B cell (primary cell): ENCODE measurements at regions of chr3 and their contacts with region 1.

Region 1: GRCh38 chr3:153043729-153044328 is 118.2 kb upstream of the RAP2B start:
- DNase-seq: no peak
- ATAC-seq: no peak
- H3K4me3 ChIP-seq: no peak overlapping the region
- H3K4me3 Mint-ChIP-seq: no peak overlapping the region
- H3K27ac ChIP-seq: no peak overlapping the region
- H3K27ac Mint-ChIP-seq: no peak overlapping the region
- H3K4me1 ChIP-seq: no peaks in the 10 kb centered on the region
- H3K4me1 Mint-ChIP-seq: no peaks in the 10 kb centered on the region
- H3K27me3 ChIP-seq: no peaks in the 10 kb centered on the region
- H3K27me3 Mint-ChIP-seq: peaks cover 6% of the 10 kb centered on the region
- CTCF ChIP-seq: no peak

Region 2: DNA sequence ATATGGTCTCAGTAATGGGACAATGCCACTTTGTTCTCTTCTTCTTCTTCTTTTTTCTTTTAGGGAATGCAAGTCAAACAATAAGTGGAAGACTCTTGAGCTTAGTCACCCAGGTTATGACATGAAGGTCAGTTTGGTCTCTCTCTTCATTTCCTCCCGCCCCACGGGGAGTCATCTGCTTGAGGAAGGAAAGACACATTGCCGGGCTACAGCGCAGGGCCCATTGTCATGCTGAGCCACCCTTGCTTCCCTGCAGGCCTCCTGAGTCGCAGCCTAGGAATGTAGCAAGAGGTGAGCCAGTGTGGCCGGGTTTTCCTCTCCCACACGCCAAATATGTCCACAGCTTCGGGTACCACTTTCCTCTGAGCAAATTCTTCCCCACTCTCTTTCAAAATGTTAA is 165.8 kb after region 1 on chr3:
- CTCF ChIA-PET with region 1: no interaction called
- POLR2A ChIA-PET with region 1: no interaction called
- intact Hi-C with region 1: no loop called
- DNase-seq: peak; percentile 4
- ATAC-seq: no peak
- H3K4me3 ChIP-seq: no peak overlapping the region
- H3K4me3 Mint-ChIP-seq: no peak overlapping the region
- H3K27ac ChIP-seq: no peak overlapping the region
- H3K27ac Mint-ChIP-seq: no peak overlapping the region
- H3K4me1 ChIP-seq: peaks cover 0 to 4% of the 10 kb centered on the region in 2 donors
- H3K4me1 Mint-ChIP-seq: no peaks in the 10 kb centered on the region
- H3K27me3 ChIP-seq: no peaks in the 10 kb centered on the region
- H3K27me3 Mint-ChIP-seq: no peaks in the 10 kb centered on the region
- CTCF ChIP-seq: no peak

Region 3: GRCh38 chr3:153290272-153291015 is 246.6 kb after region 1 on chr3:
- CTCF ChIA-PET with region 1: interaction called, 5 read pairs
- POLR2A ChIA-PET with region 1: no interaction called
- intact Hi-C with region 1: loop called (anchors 1 kb)
- DNase-seq: peak; percentile 11
- ATAC-seq: no peak
- H3K4me3 ChIP-seq: no peak overlapping the region
- H3K4me3 Mint-ChIP-seq: no peak overlapping the region
- H3K27ac ChIP-seq: no peak overlapping the region
- H3K27ac Mint-ChIP-seq: no peak overlapping the region
- H3K4me1 ChIP-seq: no peaks in the 10 kb centered on the region
- H3K4me1 Mint-ChIP-seq: no peaks in the 10 kb centered on the region
- H3K27me3 ChIP-seq: no peaks in the 10 kb centered on the region
- H3K27me3 Mint-ChIP-seq: no peaks in the 10 kb centered on the region
- CTCF ChIP-seq: no peak

Region 4: GRCh38 chr3:153443961-153444360 is 400.1 kb after region 1 on chr3:
- CTCF ChIA-PET with region 1: interaction called, 4 read pairs
- POLR2A ChIA-PET with region 1: no interaction called
- intact Hi-C with region 1: loop called (anchors 5 kb)
- DNase-seq: no peak
- ATAC-seq: no peak
- H3K4me3 ChIP-seq: no peak overlapping the region
- H3K4me3 Mint-ChIP-seq: no peak overlapping the region
- H3K27ac ChIP-seq: no peak overlapping the region
- H3K27ac Mint-ChIP-seq: no peak overlapping the region
- H3K4me1 ChIP-seq: no peaks in the 10 kb centered on the region
- H3K4me1 Mint-ChIP-seq: no peaks in the 10 kb centered on the region
- H3K27me3 ChIP-seq: no peaks in the 10 kb centered on the region
- H3K27me3 Mint-ChIP-seq: peaks cover 3% of the 10 kb centered on the region
- CTCF ChIP-seq: no peak

Region 5: DNA sequence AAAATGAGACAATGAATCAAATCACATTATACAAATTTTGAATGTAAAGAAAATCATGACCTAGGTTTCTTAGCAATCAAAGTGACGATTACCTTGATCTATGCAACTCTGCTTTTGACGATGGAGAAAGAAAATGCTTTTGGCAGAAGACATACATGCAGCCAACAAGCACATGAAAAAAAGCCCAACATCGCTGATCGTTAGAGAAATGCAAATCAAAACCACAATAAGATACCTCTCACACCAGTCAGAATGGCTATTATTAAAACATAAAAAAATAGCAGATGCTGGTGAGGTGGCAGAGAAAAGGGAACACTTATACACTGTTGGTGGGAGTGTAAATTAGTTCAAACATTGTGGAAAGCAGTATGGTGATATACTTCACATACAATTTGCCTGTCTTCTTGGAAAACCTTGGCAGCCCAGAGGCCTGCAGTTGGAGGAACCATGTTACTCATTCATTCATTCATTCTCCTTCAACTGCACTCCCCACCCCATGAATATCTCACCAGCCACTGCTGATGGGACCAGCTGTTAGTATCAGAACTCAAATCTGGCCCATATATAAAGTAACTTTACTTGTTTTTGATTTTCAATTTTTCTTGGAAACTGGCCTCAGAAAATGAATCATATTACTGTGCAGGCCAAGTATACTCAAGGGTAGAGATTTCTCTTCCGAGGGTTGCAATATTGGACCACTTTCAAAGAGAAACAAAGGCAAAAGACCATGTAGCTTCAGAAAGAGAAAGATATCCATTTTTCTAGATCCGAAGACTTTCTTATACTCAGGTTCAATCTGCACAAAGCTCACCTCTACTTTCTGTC is 718.8 kb after region 1 on chr3:
- CTCF ChIA-PET with region 1: interaction called, 47 read pairs
- POLR2A ChIA-PET with region 1: no interaction called
- intact Hi-C with region 1: no loop called
- DNase-seq: no peak
- ATAC-seq: no peak
- H3K4me3 ChIP-seq: no peak overlapping the region
- H3K4me3 Mint-ChIP-seq: no peak overlapping the region
- H3K27ac ChIP-seq: no peak overlapping the region
- H3K27ac Mint-ChIP-seq: no peak overlapping the region
- H3K4me1 ChIP-seq: no peaks in the 10 kb centered on the region
- H3K4me1 Mint-ChIP-seq: no peaks in the 10 kb centered on the region
- H3K27me3 ChIP-seq: no peaks in the 10 kb centered on the region
- H3K27me3 Mint-ChIP-seq: no peaks in the 10 kb centered on the region
- CTCF ChIP-seq: no peak

Region 6: DNA sequence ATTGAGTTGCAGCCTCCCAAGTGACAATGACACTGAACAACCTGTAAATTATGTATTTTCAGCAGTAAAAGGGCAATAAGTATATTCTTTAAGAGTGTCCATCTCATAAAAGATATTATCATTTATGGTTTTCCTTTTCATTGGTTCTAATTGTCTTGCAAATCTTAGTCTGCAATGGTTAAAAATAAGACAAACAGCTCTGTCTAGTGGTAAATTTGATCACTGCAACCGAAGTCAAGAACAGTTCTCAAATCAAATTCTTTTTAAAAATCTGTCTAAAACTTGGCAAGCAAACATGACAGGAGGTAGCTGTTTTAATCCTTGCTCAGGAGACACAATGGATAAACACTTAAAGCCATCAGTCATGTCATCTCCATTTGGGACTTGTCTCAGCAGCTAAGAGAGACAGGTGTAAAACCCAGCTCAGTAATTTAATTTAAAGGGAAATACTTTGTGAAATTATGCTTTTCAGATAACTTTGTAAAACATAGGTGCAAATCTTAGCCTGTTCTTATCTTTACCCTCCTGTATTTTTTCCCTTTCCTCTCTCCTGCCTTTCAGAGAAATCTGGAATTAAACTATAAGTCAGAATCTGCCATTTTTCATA is 927.0 kb after region 1 on chr3:
- CTCF ChIA-PET with region 1: no interaction called
- POLR2A ChIA-PET with region 1: no interaction called
- intact Hi-C with region 1: loop called (anchors 5 kb)
- DNase-seq: no peak
- ATAC-seq: no peak
- H3K4me3 ChIP-seq: no peak overlapping the region
- H3K4me3 Mint-ChIP-seq: no peak overlapping the region
- H3K27ac ChIP-seq: no peak overlapping the region
- H3K27ac Mint-ChIP-seq: no peak overlapping the region
- H3K4me1 ChIP-seq: no peaks in the 10 kb centered on the region
- H3K4me1 Mint-ChIP-seq: no peaks in the 10 kb centered on the region
- H3K27me3 ChIP-seq: no peaks in the 10 kb centered on the region
- H3K27me3 Mint-ChIP-seq: peaks cover 3% of the 10 kb centered on the region
- CTCF ChIP-seq: no peak

Region 7: GRCh38 chr3:154252759-154253638 is 1209.2 kb after region 1 on chr3:
- CTCF ChIA-PET with region 1: interaction called, 16 read pairs
- POLR2A ChIA-PET with region 1: no interaction called
- intact Hi-C with region 1: no loop called
- DNase-seq: peak; percentile 63
- ATAC-seq: peak; percentile 45
- H3K4me3 ChIP-seq: no peak overlapping the region
- H3K4me3 Mint-ChIP-seq: no peak overlapping the region
- H3K27ac ChIP-seq: no peak overlapping the region
- H3K27ac Mint-ChIP-seq: no peak overlapping the region
- H3K4me1 ChIP-seq: no peaks in the 10 kb centered on the region
- H3K4me1 Mint-ChIP-seq: peaks cover 3% of the 10 kb centered on the region
- H3K27me3 ChIP-seq: no peaks in the 10 kb centered on the region
- H3K27me3 Mint-ChIP-seq: no peaks in the 10 kb centered on the region
- CTCF ChIP-seq: peak; percentile 80